Psoas muscle (tissue), 8 donors: ENCODE measurements at regions of chr11 and their contacts with region 1.

Region 1: GRCh38 chr11:64924852-64925271 is 373 bp downstream of the PPP2R5B start:
- DNase-seq: peak in 1 of 2 donors; percentile 58
- ATAC-seq: peak in 2 of 4 donors; percentile 4 to 6
- H3K4me3 ChIP-seq: peak overlapping the region; percentile 99
- H3K27ac ChIP-seq: peak overlapping the region; percentile 97
- H3K4me1 ChIP-seq: peaks cover 17% of the 10 kb centered on the region
- H3K27me3 ChIP-seq: no peaks in the 10 kb centered on the region
- CTCF ChIP-seq: no peak

Region 2: DNA sequence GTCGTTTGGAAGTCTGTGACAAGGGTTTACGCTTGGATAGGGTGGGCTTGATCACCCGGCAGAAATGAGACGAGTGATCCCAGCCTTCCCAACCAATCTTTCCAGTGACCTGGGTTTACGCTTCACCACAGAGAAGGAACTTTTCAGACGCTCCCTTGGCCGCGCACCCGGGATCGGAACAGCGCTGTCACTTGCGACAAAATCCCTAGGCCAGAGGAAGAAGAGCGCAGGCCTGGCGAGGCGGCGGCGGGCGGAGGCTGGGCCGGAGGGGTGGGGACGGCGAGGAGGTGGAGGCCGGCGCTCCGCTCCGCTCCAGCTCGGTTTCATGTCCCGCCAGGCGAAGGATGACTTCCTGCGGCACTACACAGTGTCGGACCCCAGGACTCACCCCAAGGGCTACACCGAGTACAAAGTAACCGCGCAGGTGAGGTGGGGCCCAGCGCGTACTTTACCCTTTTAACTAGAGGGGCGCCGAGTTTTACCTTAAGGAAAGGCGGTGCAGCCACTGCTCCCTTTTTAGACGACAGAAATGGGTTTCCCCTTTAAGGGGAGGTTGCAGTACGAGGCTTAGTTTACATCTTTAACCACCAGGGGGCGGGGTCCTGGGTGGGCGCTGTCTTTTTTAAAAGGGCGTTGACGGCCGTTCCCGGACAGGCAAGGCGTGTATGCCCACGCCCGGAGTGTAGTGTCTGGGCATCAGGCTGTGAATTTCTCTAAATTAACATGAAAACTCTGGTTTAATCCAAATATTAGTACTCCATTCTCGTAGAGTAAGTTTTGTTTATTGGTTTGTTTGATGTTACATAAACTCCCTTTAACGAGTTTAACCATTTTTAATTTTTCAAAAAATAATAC is 102.6 kb after region 1 on chr11 and contains the start of gene SNX15:
- intact Hi-C with region 1: loop called in 1 of 2 experiments (anchors 5 kb)
- DNase-seq: peak; percentile 94 to 96
- ATAC-seq: peak; percentile 95 to 97 (median 96)
- H3K4me3 ChIP-seq: peak within 1 kb of the TSS; percentile 68
- H3K27ac ChIP-seq: peak within 1 kb of the TSS; percentile 84
- H3K4me1 ChIP-seq: peaks cover 9% of the 10 kb centered on the region
- H3K27me3 ChIP-seq: no peaks in the 10 kb centered on the region
- CTCF ChIP-seq: peak; percentile 77
- total RNA-seq, gene SNX15: 15.6 to 21.7 (median 18.7) TPM